MCF 10A (cell line): ENCODE measurements at regions of chr2 and their contacts with region 1.

Region 1: DNA sequence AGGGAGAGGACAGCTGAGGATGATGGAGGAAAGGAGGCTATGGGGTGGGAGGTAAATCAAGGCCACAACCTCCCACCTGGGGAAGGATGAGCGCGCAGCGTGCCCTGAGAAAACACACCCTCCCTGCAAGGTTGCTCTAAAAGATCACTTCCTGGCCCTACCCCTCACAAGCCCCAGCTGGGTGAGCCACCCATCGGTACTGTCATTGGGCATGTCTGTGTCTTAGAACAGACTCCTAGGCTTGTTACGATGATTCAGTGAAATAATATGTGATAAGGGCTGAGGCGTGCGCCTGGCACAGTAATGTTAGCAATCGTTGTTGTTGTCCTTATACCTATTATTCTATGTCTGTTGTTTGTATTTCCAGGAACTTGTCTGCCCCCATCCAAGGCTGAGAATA is 175.1 kb downstream of the ZFP36L2 start:
- DNase-seq: peak; percentile 71
- H3K4me3 Mint-ChIP-seq: no peak overlapping the region
- H3K27ac Mint-ChIP-seq: peak overlapping the region; percentile 93
- H3K4me1 Mint-ChIP-seq: peaks cover 60% of the 10 kb centered on the region
- H3K27me3 Mint-ChIP-seq: no peaks in the 10 kb centered on the region
- CTCF ChIP-seq: no peak

Region 2: DNA sequence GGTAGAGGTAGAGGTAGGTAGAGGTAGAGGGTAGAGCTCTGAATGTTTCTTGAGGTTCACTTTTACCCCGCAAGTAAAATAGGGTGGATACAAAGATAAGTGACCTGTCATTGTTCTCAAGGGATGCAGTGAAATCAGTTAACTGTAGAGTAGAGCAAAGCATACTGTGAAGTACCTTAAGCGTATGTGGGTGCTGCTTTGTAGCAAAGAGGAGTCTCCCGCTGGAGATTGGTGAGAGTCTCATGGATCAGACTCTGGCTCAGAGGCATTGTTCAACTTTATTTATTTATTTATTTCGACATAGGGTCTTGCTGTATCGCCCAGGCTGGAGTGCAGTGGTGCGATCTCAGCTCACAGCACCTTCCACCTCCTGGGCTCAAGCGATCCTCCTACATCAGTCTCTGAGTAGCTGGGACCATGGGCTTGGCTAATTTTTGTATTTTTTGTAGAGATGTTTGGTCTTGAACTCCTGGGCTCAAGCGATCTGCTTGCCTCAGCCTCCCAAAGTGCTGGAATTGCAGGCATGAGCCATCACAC is 444.1 kb before region 1 on chr2:
- CTCF ChIA-PET with region 1: no interaction called
- POLR2A ChIA-PET with region 1: no interaction called
- intact Hi-C with region 1: no loop called
- DNase-seq: no peak
- H3K4me3 Mint-ChIP-seq: no peak overlapping the region
- H3K27ac Mint-ChIP-seq: no peak overlapping the region
- H3K4me1 Mint-ChIP-seq: no peaks in the 10 kb centered on the region
- H3K27me3 Mint-ChIP-seq: no peaks in the 10 kb centered on the region
- CTCF ChIP-seq: no peak

Region 3: GRCh38 chr2:42987112-42987922 is 64.0 kb before region 1 on chr2:
- CTCF ChIA-PET with region 1: interaction called, 4 read pairs
- POLR2A ChIA-PET with region 1: interaction called, 11 read pairs
- intact Hi-C with region 1: no loop called
- DNase-seq: peak; percentile 88
- H3K4me3 Mint-ChIP-seq: no peak overlapping the region
- H3K27ac Mint-ChIP-seq: peak overlapping the region; percentile 90
- H3K4me1 Mint-ChIP-seq: peaks cover 19% of the 10 kb centered on the region
- H3K27me3 Mint-ChIP-seq: no peaks in the 10 kb centered on the region
- CTCF ChIP-seq: no peak

Region 4: GRCh38 chr2:43010438-43011157 is 40.7 kb before region 1 on chr2:
- CTCF ChIA-PET with region 1: no interaction called
- POLR2A ChIA-PET with region 1: interaction called, 10 read pairs
- intact Hi-C with region 1: no loop called
- DNase-seq: peak; percentile 68
- H3K4me3 Mint-ChIP-seq: no peak overlapping the region
- H3K27ac Mint-ChIP-seq: peak overlapping the region; percentile 26
- H3K4me1 Mint-ChIP-seq: peaks cover 28% of the 10 kb centered on the region
- H3K27me3 Mint-ChIP-seq: no peaks in the 10 kb centered on the region
- CTCF ChIP-seq: no peak

Region 5: DNA sequence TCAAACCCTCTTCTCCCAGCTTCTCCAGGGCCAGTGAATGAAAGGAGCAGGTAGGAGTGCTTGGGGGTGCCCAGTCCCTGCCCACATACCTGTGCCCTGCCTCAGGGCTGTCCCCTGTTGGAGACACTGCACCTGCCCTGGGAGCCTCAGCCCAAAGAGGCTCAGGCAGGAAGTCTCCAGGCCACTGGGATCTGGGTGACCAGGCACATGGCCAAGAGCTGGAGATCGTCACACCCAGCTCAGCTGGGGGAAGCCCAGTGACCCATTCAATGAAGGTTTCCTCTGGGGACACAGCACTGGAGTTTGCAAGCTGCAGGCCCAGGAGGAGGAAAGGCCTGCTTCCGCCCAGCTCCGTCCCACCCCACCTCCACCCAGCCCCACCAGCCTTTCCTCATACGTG is 18.7 kb after region 1 on chr2:
- CTCF ChIA-PET with region 1: interaction called, 4 read pairs
- POLR2A ChIA-PET with region 1: interaction called, 26 read pairs
- intact Hi-C with region 1: no loop called
- DNase-seq: no peak
- H3K4me3 Mint-ChIP-seq: no peak overlapping the region
- H3K27ac Mint-ChIP-seq: no peak overlapping the region
- H3K4me1 Mint-ChIP-seq: peaks cover 52% of the 10 kb centered on the region
- H3K27me3 Mint-ChIP-seq: no peaks in the 10 kb centered on the region
- CTCF ChIP-seq: no peak

Region 6: DNA sequence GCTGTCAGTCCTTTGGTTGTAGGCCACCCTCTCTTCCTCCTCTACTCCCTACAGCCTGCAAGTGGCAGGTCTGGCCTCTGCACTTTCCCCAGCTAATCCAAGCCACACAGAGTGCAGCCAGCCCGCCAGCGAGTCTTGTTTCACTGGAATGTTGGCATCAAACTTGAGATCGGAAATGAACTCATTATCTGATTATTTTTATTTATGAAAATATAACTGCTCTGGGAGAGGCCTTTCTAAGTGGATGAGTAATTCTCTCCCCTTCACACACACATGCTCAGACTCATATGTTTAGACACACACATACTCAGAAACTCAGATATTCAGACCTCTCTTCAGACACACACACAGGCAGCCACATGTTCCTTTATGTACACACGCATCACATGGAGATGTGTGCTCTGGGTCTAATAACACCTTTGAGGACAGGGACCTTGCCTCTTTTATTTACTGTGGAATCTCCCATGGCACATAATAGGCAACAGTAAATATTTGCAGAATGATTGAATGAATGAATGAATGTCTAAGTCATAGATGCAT is 23.8 kb after region 1 on chr2:
- CTCF ChIA-PET with region 1: interaction called, 4 read pairs
- POLR2A ChIA-PET with region 1: interaction called, 26 read pairs
- intact Hi-C with region 1: no loop called
- DNase-seq: peak; percentile 96
- H3K4me3 Mint-ChIP-seq: peak overlapping the region; percentile 76
- H3K27ac Mint-ChIP-seq: peak overlapping the region; percentile 89
- H3K4me1 Mint-ChIP-seq: peaks cover 64% of the 10 kb centered on the region
- H3K27me3 Mint-ChIP-seq: no peaks in the 10 kb centered on the region
- CTCF ChIP-seq: no peak

Region 7: GRCh38 chr2:43086451-43087221 is 35.3 kb after region 1 on chr2:
- CTCF ChIA-PET with region 1: interaction called, 3 read pairs
- POLR2A ChIA-PET with region 1: interaction called, 10 read pairs
- intact Hi-C with region 1: no loop called
- DNase-seq: peak; percentile 98
- H3K4me3 Mint-ChIP-seq: peak overlapping the region; percentile 48
- H3K27ac Mint-ChIP-seq: peak overlapping the region; percentile 94
- H3K4me1 Mint-ChIP-seq: peaks cover 60% of the 10 kb centered on the region
- H3K27me3 Mint-ChIP-seq: no peaks in the 10 kb centered on the region
- CTCF ChIP-seq: no peak

Region 8: GRCh38 chr2:43178602-43179542 is 127.6 kb after region 1 on chr2:
- CTCF ChIA-PET with region 1: no interaction called
- POLR2A ChIA-PET with region 1: interaction called, 14 read pairs
- intact Hi-C with region 1: no loop called
- DNase-seq: peak; percentile 95
- H3K4me3 Mint-ChIP-seq: peak overlapping the region; percentile 39
- H3K27ac Mint-ChIP-seq: peak overlapping the region; percentile 99
- H3K4me1 Mint-ChIP-seq: peaks cover 47% of the 10 kb centered on the region
- H3K27me3 Mint-ChIP-seq: no peaks in the 10 kb centered on the region
- CTCF ChIP-seq: no peak